Dorsolateral prefrontal cortex (tissue), 120 donors: ENCODE measurements at regions of chr21 and their contacts with region 1.

Region 1: GRCh38 chr21:42892931-42893755 is at the start of gene NDUFV3:
- DNase-seq: peak; percentile 99 to 100 (median 100)
- H3K4me3 ChIP-seq: peak within 1 kb of the TSS; percentile 66 to 100 (median 90)
- H3K27ac ChIP-seq: peak within 1 kb of the TSS; percentile 68 to 98 (median 93)
- H3K27me3 ChIP-seq: no peaks in the 10 kb centered on the region
- CTCF ChIP-seq: peak in 44 of 56 donors; percentile 4 to 68 (median 36)
- total RNA-seq, gene NDUFV3: 31.4 to 60.4 (median 38.6) TPM

Region 2: GRCh38 chr21:42878993-42879787 is 14.0 kb before region 1 on chr21 and contains the start of gene WDR4:
- intact Hi-C with region 1: loop called (anchors 1 kb)
- DNase-seq: peak; percentile 89 to 95 (median 92)
- H3K4me3 ChIP-seq: peak within 1 kb of the TSS; percentile 63 to 100 (median 96)
- H3K27ac ChIP-seq: peak within 1 kb of the TSS in 53 of 59 donors; percentile 43 to 95 (median 81)
- H3K27me3 ChIP-seq: no peaks in the 10 kb centered on the region
- CTCF ChIP-seq: peak in 27 of 56 donors; percentile 5 to 60 (median 24)
- total RNA-seq, gene WDR4: 10.5 to 26.1 (median 16.4) TPM

Region 3: GRCh38 chr21:42973991-42974831 is 81.1 kb after region 1 on chr21 and contains the start of gene PKNOX1:
- intact Hi-C with region 1: loop called in 1 of 2 experiments (anchors 1 kb)
- DNase-seq: peak; percentile 91 to 99 (median 98)
- H3K4me3 ChIP-seq: peak within 1 kb of the TSS; percentile 68 to 95 (median 81)
- H3K27ac ChIP-seq: peak within 1 kb of the TSS; percentile 83 to 100 (median 96)
- H3K27me3 ChIP-seq: no peaks in the 10 kb centered on the region
- CTCF ChIP-seq: peak in 7 of 56 donors; percentile 2 to 37 (median 11)
- total RNA-seq, gene PKNOX1: 12.3 to 50.7 (median 23.5) TPM